AG04449 (cell line): ENCODE measurements at regions of chr11 and their contacts with region 1.

Region 1: DNA sequence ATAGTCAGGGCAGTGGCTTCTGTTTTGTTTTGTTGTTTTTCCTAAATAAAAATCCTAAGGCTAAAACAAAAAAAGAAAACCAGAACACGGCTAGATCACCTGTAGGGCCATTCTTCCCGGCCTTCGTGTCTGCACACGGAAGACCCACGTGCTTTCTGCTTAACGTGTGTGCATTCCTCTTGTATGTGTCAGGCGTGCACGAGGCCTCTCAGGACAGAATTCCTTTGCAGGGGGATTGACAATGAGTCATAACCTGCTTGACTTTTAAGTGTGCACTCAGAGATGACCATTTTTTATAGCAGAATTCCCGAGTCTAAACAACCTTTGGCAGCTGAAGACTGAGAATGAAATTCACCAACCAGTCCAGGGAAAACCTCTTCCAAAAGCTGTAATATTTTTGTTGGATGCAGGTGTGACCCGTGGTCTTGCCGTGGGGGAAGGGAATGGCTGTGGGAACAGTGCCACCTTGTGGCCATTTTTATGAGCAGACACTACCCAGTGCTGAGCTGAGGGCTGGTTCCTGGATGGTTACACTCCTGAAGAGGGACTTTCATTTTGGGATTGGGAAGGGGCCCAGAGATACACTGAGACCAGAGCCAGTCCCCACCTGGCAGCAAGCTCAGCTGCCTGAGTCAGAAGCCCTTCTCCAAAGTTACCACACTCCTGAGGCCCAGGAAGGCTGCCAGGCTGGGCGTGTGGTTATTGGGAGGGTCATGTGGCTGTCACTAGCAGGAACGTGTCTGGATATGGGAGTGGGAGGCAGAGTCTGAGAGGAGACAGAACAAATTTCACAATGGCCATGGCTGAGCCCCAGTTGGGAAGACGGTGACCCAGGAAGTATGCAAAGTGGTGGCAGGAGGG is 35.8 kb upstream of the DKK3 start:
- DNase-seq: peak; percentile 94
- H3K4me3 ChIP-seq: peak overlapping the region; percentile 34
- CTCF ChIP-seq: peak; percentile 82

Region 2: DNA sequence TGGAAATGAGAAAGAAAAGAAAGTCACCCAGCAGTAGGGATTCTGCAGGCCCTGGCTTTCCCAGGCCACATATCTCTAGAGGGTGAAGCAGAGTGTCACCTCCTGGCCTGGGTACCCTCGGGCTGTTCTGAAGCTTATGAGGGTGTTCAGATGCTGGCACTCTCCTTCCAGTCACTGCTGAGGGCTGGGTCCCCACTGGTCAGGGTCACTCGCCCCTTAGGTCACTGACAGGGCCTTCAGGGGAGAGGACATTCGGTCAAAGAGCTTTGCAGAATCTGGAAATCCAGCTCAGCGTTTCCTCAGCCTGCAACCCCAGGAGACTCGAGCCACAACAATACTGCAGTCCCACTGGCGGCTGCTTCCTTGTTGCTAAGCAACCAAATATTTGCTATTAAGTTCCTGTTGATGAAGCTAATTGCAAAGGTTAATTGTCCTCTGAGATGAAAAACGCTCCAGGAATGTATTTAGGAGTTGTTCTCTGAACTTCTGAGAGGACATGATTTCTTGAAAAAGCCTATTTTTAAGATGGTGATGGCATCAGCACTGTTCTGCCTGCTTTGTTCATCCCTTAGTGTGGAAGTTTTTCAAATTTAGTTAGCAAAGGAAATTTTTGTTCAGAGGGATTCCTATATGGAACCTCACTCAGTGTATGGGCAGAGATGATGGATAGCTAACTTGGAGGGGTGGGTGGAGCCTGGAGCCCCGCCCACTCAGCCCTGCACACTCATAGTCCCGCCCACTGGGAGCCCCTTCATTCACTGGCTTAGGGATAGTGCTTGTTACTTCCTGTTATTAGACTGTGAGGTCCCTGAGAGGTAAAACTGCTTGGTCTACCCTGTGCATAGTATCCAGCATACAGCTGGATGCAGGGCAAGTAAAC is 800.4 kb before region 1 on chr11:
- CTCF ChIA-PET with region 1: no interaction called
- POLR2A ChIA-PET with region 1: no interaction called
- DNase-seq: no peak
- H3K4me3 ChIP-seq: no peak overlapping the region
- CTCF ChIP-seq: no peak

Region 3: GRCh38 chr11:11798586-11799438 is 245.4 kb before region 1 on chr11:
- CTCF ChIA-PET with region 1: interaction called, 66 read pairs
- POLR2A ChIA-PET with region 1: no interaction called
- DNase-seq: no peak
- H3K4me3 ChIP-seq: no peak overlapping the region
- CTCF ChIP-seq: peak; percentile 88

Region 4: GRCh38 chr11:12066799-12067508 is 22.8 kb after region 1 on chr11:
- CTCF ChIA-PET with region 1: interaction called, 37 read pairs
- POLR2A ChIA-PET with region 1: no interaction called
- DNase-seq: no peak
- H3K4me3 ChIP-seq: no peak overlapping the region
- CTCF ChIP-seq: no peak

Region 5: GRCh38 chr11:12137938-12138731 is 93.9 kb after region 1 on chr11:
- CTCF ChIA-PET with region 1: interaction called, 10 read pairs
- POLR2A ChIA-PET with region 1: no interaction called
- DNase-seq: peak; percentile 97
- H3K4me3 ChIP-seq: no peak overlapping the region
- CTCF ChIP-seq: no peak

Region 6: DNA sequence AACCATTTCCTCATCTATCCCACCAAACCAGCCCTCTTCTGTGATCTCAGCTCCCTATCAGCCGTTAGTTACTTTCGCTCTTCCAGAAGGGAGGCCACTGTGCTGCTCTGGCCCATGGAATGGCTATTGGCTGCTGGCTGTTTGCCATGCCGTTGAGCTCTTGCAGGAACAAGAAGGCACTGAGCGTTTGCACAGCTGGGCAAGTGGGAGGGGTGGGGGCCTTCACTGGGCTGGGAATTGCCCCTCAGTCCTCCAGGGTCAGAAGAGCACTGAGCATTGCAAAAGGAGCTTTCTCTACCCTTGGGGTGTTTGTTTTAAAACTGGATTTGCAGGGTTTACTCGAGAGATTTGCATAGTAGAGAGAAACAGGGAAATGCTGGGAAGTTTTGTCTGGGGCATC is 204.1 kb after region 1 on chr11:
- CTCF ChIA-PET with region 1: interaction called, 16 read pairs
- POLR2A ChIA-PET with region 1: no interaction called
- DNase-seq: no peak
- H3K4me3 ChIP-seq: no peak overlapping the region
- CTCF ChIP-seq: no peak